WTC11 (cell line): ENCODE measurements at regions of chr17 and their contacts with region 1.

Region 1: DNA sequence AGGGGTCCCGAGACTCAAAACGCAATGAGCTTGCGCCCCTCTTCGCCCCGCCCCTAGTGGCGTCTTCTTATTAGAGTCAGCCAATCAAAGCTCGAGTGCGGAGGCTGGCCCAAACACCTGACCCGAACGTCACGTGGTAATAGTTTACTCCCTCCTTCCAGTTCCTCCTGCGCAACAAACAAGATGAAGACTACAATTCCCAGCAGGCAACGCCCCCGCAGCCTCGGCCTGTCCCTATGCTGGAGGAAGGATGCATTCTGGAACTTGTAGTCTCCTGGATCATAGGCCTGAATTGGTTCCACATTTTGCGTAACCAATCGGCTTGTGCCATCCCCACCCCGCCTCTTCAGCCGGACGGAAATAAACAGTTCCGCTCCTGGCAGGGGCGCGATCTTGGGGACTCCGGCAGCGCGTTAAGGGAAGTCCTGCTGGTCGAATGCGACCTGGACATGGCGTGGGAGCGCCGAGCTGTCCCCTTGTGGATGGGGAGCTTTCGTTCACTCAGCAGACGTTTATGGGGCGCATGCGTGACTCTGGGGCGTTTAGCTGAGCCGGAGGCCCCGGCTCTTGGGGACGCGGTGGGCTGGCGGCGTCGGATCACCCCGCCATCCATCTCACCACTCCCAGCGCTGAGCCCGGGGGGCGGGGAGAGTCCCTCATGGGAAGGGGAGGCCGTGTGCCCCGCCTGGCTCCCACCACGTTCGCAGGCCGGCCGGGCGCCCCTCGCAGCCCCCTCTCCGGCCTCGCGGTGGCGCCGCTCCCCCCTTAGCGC is at the start of gene WBP2:
- DNase-seq: peak; percentile 98
- ATAC-seq: peak; percentile 92
- H3K4me3 Mint-ChIP-seq: no peak within 1 kb of the TSS
- H3K27ac Mint-ChIP-seq: peak within 1 kb of the TSS; percentile 98
- H3K4me1 Mint-ChIP-seq: peaks cover 12% of the 10 kb centered on the region
- H3K27me3 Mint-ChIP-seq: no peaks in the 10 kb centered on the region
- CTCF ChIP-seq: no peak
- total RNA-seq, gene WBP2: 64.3 to 69.4 TPM (median 68.8 TPM) in 3 replicates

Region 2: GRCh38 chr17:75784473-75785015 is 71.0 kb before region 1 on chr17 and contains the start of gene UNK:
- CTCF ChIA-PET with region 1: interaction called, 9 read pairs
- POLR2A ChIA-PET with region 1: interaction called, 13 read pairs
- DNase-seq: peak; percentile 97
- ATAC-seq: peak; percentile 77
- H3K4me3 Mint-ChIP-seq: peak within 1 kb of the TSS; percentile 95
- H3K27ac Mint-ChIP-seq: peak within 1 kb of the TSS; percentile 100
- H3K4me1 Mint-ChIP-seq: peaks cover 34% of the 10 kb centered on the region
- H3K27me3 Mint-ChIP-seq: peaks cover 3% of the 10 kb centered on the region
- CTCF ChIP-seq: no peak
- total RNA-seq, gene UNK: 35.0 to 37.8 TPM (median 35.4 TPM) in 3 replicates

Region 3: DNA sequence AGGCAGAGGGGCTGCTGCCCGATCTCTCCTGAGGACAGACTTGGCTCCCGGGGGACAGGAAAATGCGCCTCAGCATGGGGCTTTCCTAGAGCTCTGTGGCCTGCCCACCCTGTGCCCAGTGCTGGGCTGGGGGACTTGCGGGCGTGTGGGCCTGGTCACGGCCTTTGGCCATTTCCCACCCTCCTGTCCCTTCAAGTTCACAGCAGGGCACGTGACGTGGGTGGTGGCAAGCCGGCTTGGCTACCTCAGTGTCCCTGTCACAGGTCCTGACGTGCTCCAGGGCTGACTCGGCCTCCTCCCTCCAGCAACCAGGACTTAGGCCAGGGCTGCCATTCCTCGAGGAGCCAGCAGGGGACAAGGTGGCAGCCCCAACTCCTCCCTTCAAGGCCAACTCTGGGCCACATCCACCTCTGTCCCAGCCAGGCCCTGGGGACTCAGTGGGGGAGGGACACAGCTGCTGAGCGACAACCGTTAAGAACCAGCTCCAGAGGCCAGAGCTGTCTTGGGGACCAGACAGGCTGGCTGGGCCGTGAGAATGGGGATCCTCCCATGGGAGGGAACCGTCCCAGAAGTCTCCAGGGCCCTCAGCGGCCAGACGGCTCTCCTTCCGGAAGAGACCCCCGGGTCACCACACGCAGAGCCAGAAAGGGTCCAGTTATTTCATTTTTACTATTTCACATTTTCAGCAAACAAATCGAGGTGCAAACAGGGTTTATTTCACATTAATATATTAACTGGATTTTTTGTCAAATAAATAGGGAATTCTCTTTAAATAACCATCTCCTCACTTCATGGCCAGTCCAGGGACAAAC is 10.2 kb before region 1 on chr17:
- CTCF ChIA-PET with region 1: interaction called, 51 read pairs
- POLR2A ChIA-PET with region 1: interaction called, 12 read pairs
- DNase-seq: peak; percentile 88
- ATAC-seq: peak; percentile 90
- H3K4me3 Mint-ChIP-seq: no peak overlapping the region
- H3K27ac Mint-ChIP-seq: peak overlapping the region; percentile 90
- H3K4me1 Mint-ChIP-seq: peaks cover 21% of the 10 kb centered on the region
- H3K27me3 Mint-ChIP-seq: no peaks in the 10 kb centered on the region
- CTCF ChIP-seq: peak; percentile 82

Region 4: DNA sequence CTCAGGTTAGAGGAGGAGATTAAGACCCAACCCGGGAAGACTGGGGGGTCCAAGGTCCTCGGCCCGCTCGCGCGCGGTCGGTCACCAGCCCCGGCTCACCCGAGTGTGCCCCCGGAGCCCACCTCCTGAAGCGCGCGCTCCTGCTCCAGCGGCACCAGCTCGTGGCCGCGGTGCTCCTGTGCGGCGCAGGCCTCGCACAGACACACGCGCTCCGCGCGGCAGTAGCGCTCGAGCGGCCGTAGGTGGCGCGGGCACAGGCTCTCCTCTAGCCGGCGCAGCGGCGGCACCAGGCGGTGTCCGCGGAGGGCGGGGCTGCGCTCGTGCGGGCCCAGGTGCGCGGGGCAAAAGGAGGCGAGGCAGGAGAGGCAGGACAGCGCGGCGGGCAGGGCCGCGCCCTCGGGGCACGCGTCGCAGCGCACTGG is 22.3 kb after region 1 on chr17:
- CTCF ChIA-PET with region 1: interaction called, 48 read pairs
- POLR2A ChIA-PET with region 1: interaction called, 16 read pairs
- DNase-seq: peak; percentile 81
- ATAC-seq: peak; percentile 81
- H3K4me3 Mint-ChIP-seq: peak overlapping the region; percentile 77
- H3K27ac Mint-ChIP-seq: no peak overlapping the region
- H3K4me1 Mint-ChIP-seq: peaks cover 17% of the 10 kb centered on the region
- H3K27me3 Mint-ChIP-seq: peaks cover 39% of the 10 kb centered on the region
- CTCF ChIP-seq: no peak

Region 5: DNA sequence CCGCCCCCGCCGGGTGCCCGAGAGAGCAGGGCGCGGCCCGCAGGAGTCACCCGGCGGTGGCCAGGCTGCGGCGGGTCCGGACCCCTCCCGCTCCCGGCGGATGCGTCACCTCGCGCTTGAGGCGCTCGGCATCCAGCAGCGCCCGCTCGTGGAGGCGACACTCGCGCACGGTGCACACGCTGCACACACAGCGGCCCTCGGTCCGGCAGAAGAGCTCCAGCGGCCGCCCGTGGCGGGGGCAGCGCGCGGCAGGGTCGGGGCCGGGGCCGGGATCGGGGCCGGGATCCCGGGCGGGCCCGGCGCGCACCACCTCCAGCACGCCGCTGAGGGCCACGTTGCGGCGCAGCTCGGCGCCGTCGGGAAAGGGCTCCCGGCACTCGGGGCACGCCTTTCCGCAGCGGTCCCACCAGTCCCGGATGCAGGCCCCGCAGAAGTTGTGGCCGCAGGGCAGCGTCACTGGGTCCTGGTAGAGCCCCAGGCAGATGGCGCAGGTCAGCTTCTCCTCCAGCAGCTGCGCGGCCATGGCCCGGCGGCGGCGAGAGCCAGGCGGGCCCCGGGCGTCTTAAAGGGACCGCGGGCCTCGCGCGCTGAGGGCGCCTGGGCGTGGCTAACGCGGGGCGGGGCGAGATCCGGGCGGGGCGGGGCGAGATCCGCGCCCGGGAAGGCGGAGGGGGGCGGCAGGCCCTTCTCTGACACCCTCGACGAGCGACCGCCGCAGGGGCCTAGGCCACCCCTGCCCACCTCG is 41.1 kb after region 1 on chr17 and contains the start of gene TRIM65:
- CTCF ChIA-PET with region 1: interaction called, 36 read pairs
- POLR2A ChIA-PET with region 1: interaction called, 6 read pairs
- DNase-seq: peak; percentile 73
- ATAC-seq: peak; percentile 60
- H3K4me3 Mint-ChIP-seq: peak within 1 kb of the TSS; percentile 82
- H3K27ac Mint-ChIP-seq: peak within 1 kb of the TSS; percentile 88
- H3K4me1 Mint-ChIP-seq: peaks cover 26% of the 10 kb centered on the region
- H3K27me3 Mint-ChIP-seq: no peaks in the 10 kb centered on the region
- CTCF ChIP-seq: no peak
- total RNA-seq, gene TRIM65: 51.3 to 56.4 TPM (median 51.4 TPM) in 3 replicates

Region 6: GRCh38 chr17:75920045-75920560 is 64.6 kb after region 1 on chr17:
- CTCF ChIA-PET with region 1: no interaction called
- POLR2A ChIA-PET with region 1: no interaction called
- DNase-seq: no peak
- ATAC-seq: no peak
- H3K4me3 Mint-ChIP-seq: no peak overlapping the region
- H3K27ac Mint-ChIP-seq: no peak overlapping the region; the same call in 1 of the 2 replicates
- H3K4me1 Mint-ChIP-seq: no peaks in the 10 kb centered on the region
- H3K27me3 Mint-ChIP-seq: no peaks in the 10 kb centered on the region
- CTCF ChIP-seq: no peak

Region 7: DNA sequence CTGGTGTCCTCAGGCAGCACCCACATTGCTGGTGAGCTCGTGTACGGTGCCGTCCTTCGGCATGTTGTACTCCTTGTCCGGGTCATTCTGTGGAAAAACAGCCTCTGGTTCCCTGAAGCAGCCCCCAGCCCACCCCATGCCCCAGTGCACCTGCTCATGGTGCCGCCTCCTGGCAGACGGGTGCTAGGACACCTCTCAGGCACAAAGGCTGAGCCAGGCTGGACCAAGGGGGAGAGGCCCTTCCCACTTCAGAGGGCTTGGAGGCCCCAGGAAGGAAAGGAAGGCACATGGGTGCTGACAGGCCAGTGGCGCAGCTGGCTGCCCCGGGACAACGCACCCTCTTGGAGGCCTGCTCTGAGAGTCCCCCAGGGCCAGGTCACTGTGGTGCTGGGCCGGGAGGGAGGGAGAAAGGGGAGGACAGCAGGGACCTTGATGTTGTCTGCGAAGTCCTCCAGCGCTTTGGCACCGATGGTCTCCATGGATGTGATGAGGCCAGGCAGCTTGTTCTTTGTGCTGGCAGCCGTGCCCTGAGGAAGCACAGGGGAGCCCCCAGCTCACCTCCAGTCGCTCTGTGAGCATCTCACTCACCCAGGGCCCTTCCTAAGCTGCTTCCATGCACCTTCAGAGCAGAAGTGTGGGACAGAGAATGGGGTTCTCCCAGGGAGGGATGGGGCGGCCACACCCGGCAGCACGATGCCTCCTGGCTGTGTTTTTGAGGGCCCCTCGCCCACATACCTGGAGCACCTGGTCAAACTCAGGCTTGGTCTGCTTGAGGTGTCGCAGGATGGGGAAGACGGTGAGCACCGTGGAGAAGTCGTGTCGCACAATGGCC is 232.8 kb after region 1 on chr17:
- CTCF ChIA-PET with region 1: no interaction called
- POLR2A ChIA-PET with region 1: no interaction called
- DNase-seq: peak; percentile 66
- ATAC-seq: peak; percentile 91
- H3K4me3 Mint-ChIP-seq: no peak overlapping the region
- H3K27ac Mint-ChIP-seq: no peak overlapping the region
- H3K4me1 Mint-ChIP-seq: no peaks in the 10 kb centered on the region
- H3K27me3 Mint-ChIP-seq: no peaks in the 10 kb centered on the region
- CTCF ChIP-seq: peak; percentile 31; the same call in 1 of the 2 replicates